Transverse colon (tissue), 4 donors: ENCODE measurements at regions of chr15 and their contacts with region 1.

Region 1: DNA sequence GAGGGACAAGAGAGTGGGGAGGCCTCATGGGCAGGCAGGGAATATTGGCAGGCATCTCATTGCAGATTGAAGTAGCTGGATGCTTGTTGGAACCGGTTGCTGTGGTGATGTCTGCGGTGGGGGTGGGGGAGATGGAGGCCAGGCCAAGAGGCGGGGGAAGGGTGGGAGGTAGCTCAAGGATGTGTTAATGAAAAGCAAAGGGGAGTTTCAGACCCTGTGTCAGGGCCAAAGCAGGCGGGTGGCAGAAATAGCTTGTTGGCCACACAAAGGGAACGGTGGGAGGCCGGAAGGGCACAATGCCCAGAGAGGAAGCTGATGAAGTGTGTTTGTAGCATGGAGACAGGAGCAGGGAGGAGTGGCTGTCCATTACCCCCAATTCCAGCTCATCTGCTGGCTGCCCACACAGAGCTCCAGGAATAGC is 28.0 kb downstream of the CCDC33 start:
- DNase-seq: no peak
- H3K4me3 ChIP-seq: no peak overlapping the region
- H3K27ac ChIP-seq: no peak overlapping the region
- H3K4me1 ChIP-seq: no peaks in the 10 kb centered on the region
- H3K27me3 ChIP-seq: peaks cover 22% of the 10 kb centered on the region
- CTCF ChIP-seq: no peak
- EP300 ChIP-seq: no peak
- POLR2A ChIP-seq: no peak

Region 2: GRCh38 chr15:72722071-72722696 is 1541.9 kb before region 1 on chr15:
- in situ Hi-C with region 1: no loop called
- intact Hi-C with region 1: loop called (anchors 5 kb)
- DNase-seq: peak; percentile 72
- H3K4me3 ChIP-seq: no peak overlapping the region
- H3K27ac ChIP-seq: no peak overlapping the region
- H3K4me1 ChIP-seq: no peaks in the 10 kb centered on the region
- H3K27me3 ChIP-seq: no peaks in the 10 kb centered on the region
- CTCF ChIP-seq: peak; percentile 59 to 69 (median 63)
- EP300 ChIP-seq: no peak
- POLR2A ChIP-seq: no peak